ENCODE measurements at regions of chr13 and their contacts with region 1.

Region 1: DNA sequence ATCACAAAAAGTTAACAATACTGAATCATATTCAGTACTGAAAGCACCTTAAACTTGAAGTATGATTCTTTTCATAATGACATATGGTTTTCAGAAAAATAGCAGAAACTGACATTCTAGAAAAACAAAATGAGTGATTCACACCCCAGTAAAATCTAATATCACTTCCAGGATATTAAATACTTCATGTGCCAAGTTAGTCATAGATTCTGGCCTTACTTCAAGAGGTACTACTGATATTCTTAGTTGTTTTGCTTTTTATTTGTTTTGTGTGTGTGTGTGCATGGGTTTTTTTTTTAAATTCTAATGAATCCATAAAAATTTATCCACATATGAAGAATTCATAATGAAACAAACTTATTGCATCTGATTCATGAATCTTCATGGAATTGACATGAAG is 207.9 kb upstream of the UFM1 start:
- DNase-seq: no peak
- H3K4me3 ChIP-seq: no peak overlapping the region
- H3K27ac ChIP-seq: no peak overlapping the region
- H3K4me1 ChIP-seq: no peaks in the 10 kb centered on the region
- H3K27me3 ChIP-seq: no peaks in the 10 kb centered on the region
- CTCF ChIP-seq: no peak
- POLR2A ChIP-seq: no peak

Region 2: DNA sequence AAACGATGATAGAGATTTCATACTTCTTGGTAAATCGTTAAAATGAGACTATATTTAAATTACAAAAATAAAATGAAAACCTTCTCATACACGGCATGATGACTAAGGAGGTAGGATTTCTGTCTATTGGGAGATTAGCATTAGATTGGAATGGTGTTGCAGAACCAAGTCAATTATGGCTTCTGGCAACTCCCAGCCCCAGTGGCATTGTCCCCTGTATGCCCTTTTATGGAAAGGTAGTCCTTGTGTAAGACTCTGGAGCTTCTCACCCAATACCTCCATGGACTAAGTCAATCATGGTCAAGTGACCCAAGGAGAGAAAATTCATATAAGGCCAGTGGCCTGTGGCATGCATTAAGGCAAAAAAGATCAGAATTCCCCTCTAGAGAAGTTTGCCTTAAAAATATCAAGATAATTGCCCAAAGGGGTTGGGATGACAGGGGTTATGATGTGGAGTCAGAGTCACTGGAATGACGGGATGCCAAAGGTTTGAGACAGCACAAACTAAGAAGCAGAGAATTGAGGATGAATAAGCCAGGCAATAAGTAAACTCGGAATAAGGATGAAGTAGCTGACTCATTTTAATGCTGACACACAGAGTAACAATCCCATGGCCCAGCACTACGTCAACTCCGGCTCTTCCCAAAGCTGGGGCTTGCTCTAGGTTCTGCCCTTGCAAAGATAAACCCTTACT is 485.4 kb before region 1 on chr13:
- intact Hi-C with region 1: no loop called
- DNase-seq: no peak
- H3K4me3 ChIP-seq: no peak overlapping the region
- H3K27ac ChIP-seq: no peak overlapping the region
- H3K4me1 ChIP-seq: no peaks in the 10 kb centered on the region
- H3K27me3 ChIP-seq: no peaks in the 10 kb centered on the region
- CTCF ChIP-seq: no peak
- POLR2A ChIP-seq: no peak

Region 3: DNA sequence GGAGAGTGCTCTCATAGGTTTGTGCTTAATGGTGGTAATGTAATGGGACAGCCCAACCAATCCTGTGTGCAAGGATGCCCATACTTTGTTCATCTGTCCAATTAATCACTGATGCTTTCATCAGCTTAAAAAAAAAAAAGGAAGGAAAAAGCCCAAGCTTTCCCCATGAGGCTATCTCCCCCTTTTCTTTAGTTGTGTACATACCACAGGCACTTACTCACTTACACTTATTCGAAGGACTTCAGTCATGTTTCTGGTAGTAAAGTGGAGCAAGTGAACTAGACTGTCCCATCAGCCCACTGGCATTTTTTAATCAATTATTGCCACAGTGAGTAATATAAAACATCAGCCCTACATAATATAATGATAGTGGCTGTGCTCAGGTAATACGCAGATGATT is 24.3 kb after region 1 on chr13:
- intact Hi-C with region 1: loop called (anchors 1 kb)
- DNase-seq: no peak
- H3K4me3 ChIP-seq: no peak overlapping the region
- H3K27ac ChIP-seq: no peak overlapping the region
- H3K4me1 ChIP-seq: no peaks in the 10 kb centered on the region
- H3K27me3 ChIP-seq: no peaks in the 10 kb centered on the region
- CTCF ChIP-seq: no peak
- POLR2A ChIP-seq: no peak

Measured in vagina (tissue), 2 donors.